ENCODE measurements at regions of chr11 and their contacts with region 1.

Region 1: GRCh38 chr11:107882095-107882820 is 23.7 kb upstream of the SLC35F2 start:
- DNase-seq: no peak
- ATAC-seq: no peak
- H3K4me3 ChIP-seq: no peak overlapping the region
- H3K4me3 Mint-ChIP-seq: no peak overlapping the region
- H3K27ac ChIP-seq: no peak overlapping the region
- H3K27ac Mint-ChIP-seq: no peak overlapping the region
- H3K4me1 ChIP-seq: no peaks in the 10 kb centered on the region
- H3K4me1 Mint-ChIP-seq: no peaks in the 10 kb centered on the region
- H3K27me3 ChIP-seq: peaks cover 0 to 9% of the 10 kb centered on the region in 2 experiments
- H3K27me3 Mint-ChIP-seq: peaks cover 0 to 13% of the 10 kb centered on the region in 2 donors

Region 2: DNA sequence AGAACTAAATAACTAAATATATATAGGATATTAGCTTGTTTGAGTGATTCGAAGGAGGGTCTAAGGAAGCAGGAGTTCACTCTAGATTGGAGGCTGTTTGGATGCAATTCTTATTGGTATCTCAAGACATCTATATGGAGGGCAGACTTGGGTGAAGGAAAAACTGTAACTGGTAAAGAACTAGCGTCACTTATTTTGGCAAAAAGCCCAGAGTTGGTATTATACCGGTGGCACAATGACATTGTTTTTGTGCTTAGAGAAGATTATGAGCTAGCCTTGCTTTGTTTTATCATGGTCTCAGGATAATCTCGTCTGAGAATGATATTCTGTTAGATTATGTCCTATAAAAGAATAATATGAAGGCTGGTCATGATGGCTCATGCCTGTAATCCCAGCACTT is 17.7 kb before region 1 on chr11:
- CTCF ChIA-PET with region 1: interaction called in 1 of 2 experiments, 3 read pairs
- POLR2A ChIA-PET with region 1: interaction called in 1 of 2 experiments, 13 read pairs
- DNase-seq: no peak
- ATAC-seq: no peak
- H3K4me3 ChIP-seq: no peak overlapping the region
- H3K4me3 Mint-ChIP-seq: no peak overlapping the region
- H3K27ac ChIP-seq: no peak overlapping the region
- H3K27ac Mint-ChIP-seq: no peak overlapping the region
- H3K4me1 ChIP-seq: peaks cover 0 to 4% of the 10 kb centered on the region in 2 experiments
- H3K4me1 Mint-ChIP-seq: peaks cover 3 to 4% (median 3%) of the 10 kb centered on the region in 3 donors
- H3K27me3 ChIP-seq: peaks cover 0 to 4% of the 10 kb centered on the region in 2 experiments
- H3K27me3 Mint-ChIP-seq: no peaks in the 10 kb centered on the region

Measured in T-cell (primary cell).